ENCODE measurements at regions of chr16 and their contacts with region 1.

Region 1: GRCh38 chr16:11715246-11715947 is 27.3 kb downstream of the TXNDC11 start:
- DNase-seq: no peak
- ATAC-seq: no peak
- H3K4me3 ChIP-seq: no peak overlapping the region
- H3K27ac ChIP-seq: no peak overlapping the region; a peak in 2 of 6 replicates
- H3K4me1 ChIP-seq: peaks cover 21% of the 10 kb centered on the region
- CTCF ChIP-seq: no peak
- EP300 ChIP-seq: no peak
- POLR2A ChIP-seq: no peak
- RAD21 ChIP-seq: no peak

Region 2: GRCh38 chr16:10971560-10971961 is 743.8 kb before region 1 on chr16:
- CTCF ChIA-PET with region 1: interaction called, 10 read pairs
- POLR2A ChIA-PET with region 1: no interaction called
- DNase-seq: peak; percentile 51 to 77
- ATAC-seq: peak; percentile 63 to 81; a peak in 4 of 6 replicates
- H3K4me3 ChIP-seq: no peak overlapping the region
- H3K27ac ChIP-seq: peak overlapping the region in 1 of 2 experiments; percentile 15; a peak in 1 of 6 replicates
- H3K4me1 ChIP-seq: no peaks in the 10 kb centered on the region
- CTCF ChIP-seq: peak; percentile 80
- EP300 ChIP-seq: no peak
- POLR2A ChIP-seq: no peak
- RAD21 ChIP-seq: peak; percentile 89 to 91

Region 3: GRCh38 chr16:11407047-11407982 is 308.1 kb before region 1 on chr16:
- CTCF ChIA-PET with region 1: interaction called, 344 read pairs
- POLR2A ChIA-PET with region 1: no interaction called
- DNase-seq: peak; percentile 84 to 86
- ATAC-seq: peak; percentile 61 to 80
- H3K4me3 ChIP-seq: no peak overlapping the region
- H3K27ac ChIP-seq: peak overlapping the region; percentile 57 to 77
- H3K4me1 ChIP-seq: peaks cover 35% of the 10 kb centered on the region
- CTCF ChIP-seq: peak; percentile 79
- EP300 ChIP-seq: no peak
- POLR2A ChIP-seq: no peak
- RAD21 ChIP-seq: peak; percentile 93 to 94

Region 4: GRCh38 chr16:11675561-11676511 is 39.6 kb before region 1 on chr16:
- CTCF ChIA-PET with region 1: interaction called, 16 read pairs
- POLR2A ChIA-PET with region 1: no interaction called
- DNase-seq: peak; percentile 50 to 64
- ATAC-seq: peak; percentile 46 to 64
- H3K4me3 ChIP-seq: no peak overlapping the region
- H3K27ac ChIP-seq: peak overlapping the region; percentile 68 to 79
- H3K4me1 ChIP-seq: peaks cover 58% of the 10 kb centered on the region
- CTCF ChIP-seq: no peak
- EP300 ChIP-seq: no peak
- POLR2A ChIP-seq: no peak
- RAD21 ChIP-seq: peak in 1 of 2 experiments; percentile 14; a peak in 1 of 5 replicates

Region 5: DNA sequence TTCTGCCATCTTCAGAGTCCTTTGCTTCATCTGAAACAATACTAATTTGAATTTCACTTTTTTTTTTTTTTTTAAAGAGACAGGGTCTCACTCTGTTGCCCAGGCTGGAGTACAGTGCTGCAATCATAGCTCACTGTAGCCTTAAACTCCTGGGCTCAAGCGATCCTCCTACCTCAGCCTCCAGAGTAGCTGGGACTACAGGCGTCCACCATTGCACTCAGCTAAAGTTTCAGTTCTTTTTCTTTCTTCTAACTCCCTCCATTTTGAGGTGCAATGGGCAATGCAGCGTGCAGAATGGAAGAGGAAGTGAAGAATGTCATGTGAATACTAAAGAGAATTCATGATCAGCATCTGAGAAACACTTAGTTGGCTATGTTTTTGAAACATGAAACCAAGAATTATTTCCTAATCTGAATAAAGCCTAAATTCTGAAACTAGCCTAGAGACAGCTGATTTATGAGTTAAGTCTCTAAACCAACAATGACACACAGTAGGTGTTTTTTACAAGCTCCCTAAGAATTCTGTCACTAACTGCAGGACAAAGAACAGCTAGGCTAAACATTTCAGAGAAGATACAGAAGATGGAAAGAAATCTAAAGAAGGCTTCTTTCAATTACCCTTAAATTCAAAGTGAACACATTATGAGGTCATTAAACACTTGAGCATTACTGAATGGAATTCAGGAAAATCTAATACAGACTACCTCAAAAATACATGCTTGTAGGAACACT is 26.2 kb before region 1 on chr16:
- CTCF ChIA-PET with region 1: interaction called, 18 read pairs
- POLR2A ChIA-PET with region 1: no interaction called
- DNase-seq: no peak
- ATAC-seq: no peak
- H3K4me3 ChIP-seq: no peak overlapping the region
- H3K27ac ChIP-seq: no peak overlapping the region
- H3K4me1 ChIP-seq: peaks cover 14% of the 10 kb centered on the region
- CTCF ChIP-seq: no peak
- EP300 ChIP-seq: no peak
- POLR2A ChIP-seq: no peak
- RAD21 ChIP-seq: no peak

Region 6: DNA sequence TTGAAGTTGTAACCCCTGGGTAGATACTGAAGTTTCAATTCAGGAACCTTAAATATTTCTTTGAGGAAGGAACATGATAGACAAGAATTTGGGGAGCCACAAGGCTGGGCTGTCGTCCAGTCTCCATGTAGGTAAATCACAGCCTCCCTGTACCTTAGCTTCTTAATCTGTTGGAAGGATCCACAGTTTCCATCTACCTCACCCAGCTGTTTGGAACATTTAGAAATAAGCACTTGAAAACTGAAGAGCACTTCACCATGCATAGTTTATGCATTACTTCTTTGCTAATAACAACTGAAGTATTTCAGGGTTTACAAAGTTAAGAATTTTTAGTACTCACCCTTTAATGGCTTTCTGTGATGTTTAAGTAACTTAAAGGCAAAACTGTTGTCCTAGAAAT is 10.1 kb after region 1 on chr16:
- CTCF ChIA-PET with region 1: interaction called, 11 read pairs
- POLR2A ChIA-PET with region 1: no interaction called
- DNase-seq: no peak
- ATAC-seq: no peak
- H3K4me3 ChIP-seq: no peak overlapping the region
- H3K27ac ChIP-seq: no peak overlapping the region
- H3K4me1 ChIP-seq: peaks cover 11% of the 10 kb centered on the region; the same call in 2 of the 3 replicates
- CTCF ChIP-seq: no peak
- EP300 ChIP-seq: no peak
- POLR2A ChIP-seq: no peak
- RAD21 ChIP-seq: no peak

Region 7: GRCh38 chr16:11742539-11743307 is 27.3 kb after region 1 on chr16 and contains the start of gene TXNDC11:
- CTCF ChIA-PET with region 1: interaction called, 16 read pairs
- POLR2A ChIA-PET with region 1: interaction called, 6 read pairs
- DNase-seq: peak; percentile 85 to 99
- ATAC-seq: peak; percentile 94 to 95
- H3K4me3 ChIP-seq: peak within 1 kb of the TSS; percentile 87
- H3K27ac ChIP-seq: peak within 1 kb of the TSS; percentile 91 to 97
- H3K4me1 ChIP-seq: peaks cover 33% of the 10 kb centered on the region
- CTCF ChIP-seq: no peak
- EP300 ChIP-seq: no peak
- POLR2A ChIP-seq: peak; percentile 96
- RAD21 ChIP-seq: no peak
- polyA plus RNA-seq, gene TXNDC11: 42.4 and 45.1 TPM in 2 replicates

Region 8: GRCh38 chr16:11783319-11784037 is 68.1 kb after region 1 on chr16:
- CTCF ChIA-PET with region 1: no interaction called
- POLR2A ChIA-PET with region 1: no interaction called
- DNase-seq: no peak
- ATAC-seq: peak in 1 of 2 experiments; percentile 40; a peak in 3 of 6 replicates
- H3K4me3 ChIP-seq: no peak overlapping the region
- H3K27ac ChIP-seq: peak overlapping the region; percentile 27 to 54; a peak in 3 of 6 replicates
- H3K4me1 ChIP-seq: peaks cover 19% of the 10 kb centered on the region
- CTCF ChIP-seq: no peak
- EP300 ChIP-seq: no peak
- POLR2A ChIP-seq: no peak
- RAD21 ChIP-seq: no peak

Measured in A549 (cell line).